Pancreas (tissue), 10 donors: ENCODE measurements at regions of chr5 and their contacts with region 1.

Region 1: GRCh38 chr5:141878711-141879425 is 658 bp upstream of the PCDH1 start:
- DNase-seq: peak; percentile 85 to 92 (median 90)
- ATAC-seq: peak; percentile 73 to 80 (median 76)
- H3K4me3 ChIP-seq: peak overlapping the region; percentile 29 to 82 (median 57)
- H3K27ac ChIP-seq: peak overlapping the region; percentile 39 to 87 (median 76)
- H3K4me1 ChIP-seq: peaks cover 6 to 17% (median 10%) of the 10 kb centered on the region in 3 donors
- H3K27me3 ChIP-seq: peaks cover 0 to 5% (median 0%) of the 10 kb centered on the region in 4 donors
- CTCF ChIP-seq: peak; percentile 93 to 99 (median 96)

Region 2: GRCh38 chr5:141701360-141702119 is 177.3 kb before region 1 on chr5:
- intact Hi-C with region 1: loop called in 2 of 3 experiments (anchors 2 to 5 kb)
- DNase-seq: no peak
- ATAC-seq: peak in 1 of 4 donors; percentile 4
- H3K4me3 ChIP-seq: peak overlapping the region in 2 of 4 donors; percentile 51 to 57
- H3K27ac ChIP-seq: no peak overlapping the region
- H3K4me1 ChIP-seq: peaks cover 0 to 4% (median 0%) of the 10 kb centered on the region in 3 donors
- H3K27me3 ChIP-seq: peaks cover 0 to 7% (median 2%) of the 10 kb centered on the region in 4 donors
- CTCF ChIP-seq: no peak

Region 3: DNA sequence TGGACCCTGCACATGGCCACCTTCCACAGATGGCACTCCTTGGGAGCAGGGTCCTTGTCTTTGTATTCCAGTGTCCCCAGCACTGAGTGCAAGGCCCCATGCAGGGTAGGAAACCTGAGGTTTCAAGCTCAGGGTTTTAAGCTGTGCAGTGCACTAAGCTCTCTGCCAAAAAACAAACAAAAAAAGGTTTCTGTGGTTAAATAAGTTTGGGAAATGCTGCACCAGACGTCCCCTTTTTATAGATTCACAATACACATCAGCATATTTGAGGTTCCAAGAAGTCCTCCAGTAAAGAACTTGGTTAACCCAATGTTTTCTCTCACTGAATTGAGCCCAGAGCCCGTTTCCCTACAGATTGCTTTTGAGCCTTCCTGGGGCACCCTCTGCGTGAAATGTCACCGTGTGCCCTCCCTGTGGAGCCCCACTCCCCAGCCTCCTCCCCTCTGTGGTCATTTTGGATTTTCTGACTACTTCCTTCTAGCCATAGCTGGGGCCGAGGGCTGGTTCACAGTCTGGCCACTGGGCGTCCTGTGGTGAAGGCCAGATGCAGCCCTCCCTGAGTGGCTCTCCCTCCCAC is 61.9 kb after region 1 on chr5:
- intact Hi-C with region 1: loop called in 1 of 3 experiments (anchors 10 kb)
- DNase-seq: no peak
- ATAC-seq: peak in 3 of 4 donors; percentile 46 to 81 (median 64)
- H3K4me3 ChIP-seq: no peak overlapping the region
- H3K27ac ChIP-seq: peak overlapping the region in 1 of 4 donors; percentile 17
- H3K4me1 ChIP-seq: no peaks in the 10 kb centered on the region
- H3K27me3 ChIP-seq: no peaks in the 10 kb centered on the region
- CTCF ChIP-seq: no peak

Region 4: DNA sequence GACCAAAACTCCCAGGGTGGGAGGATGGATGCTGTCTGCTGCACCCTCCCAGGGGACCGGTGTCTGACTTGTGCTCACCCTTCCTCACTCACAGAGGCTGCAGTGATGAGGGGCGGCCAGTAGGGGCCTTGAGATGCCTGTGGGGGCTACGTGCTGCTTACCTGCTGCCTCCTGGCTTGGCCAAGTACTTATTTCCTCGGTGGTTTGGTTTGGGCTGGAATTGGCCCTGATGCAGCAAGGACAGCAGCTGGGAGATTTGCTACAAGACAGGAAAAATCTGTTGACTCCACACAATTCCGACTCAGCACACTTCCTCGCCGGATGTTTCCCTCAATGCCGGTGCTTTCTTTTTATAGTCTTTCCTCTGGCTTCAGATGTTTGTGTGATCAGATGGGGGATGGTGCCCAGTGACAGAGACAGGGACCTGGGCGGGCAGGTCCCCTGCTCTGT is 72.5 kb after region 1 on chr5:
- intact Hi-C with region 1: loop called in 2 of 3 experiments (anchors 10 kb)
- DNase-seq: no peak
- ATAC-seq: peak in 3 of 4 donors; percentile 17 to 41 (median 40)
- H3K4me3 ChIP-seq: no peak overlapping the region
- H3K27ac ChIP-seq: no peak overlapping the region
- H3K4me1 ChIP-seq: no peaks in the 10 kb centered on the region
- H3K27me3 ChIP-seq: no peaks in the 10 kb centered on the region
- CTCF ChIP-seq: no peak

Region 5: GRCh38 chr5:142034994-142035393 is 156.1 kb after region 1 on chr5:
- intact Hi-C with region 1: no loop called
- DNase-seq: no peak
- ATAC-seq: no peak
- H3K4me3 ChIP-seq: no peak overlapping the region
- H3K27ac ChIP-seq: no peak overlapping the region
- H3K4me1 ChIP-seq: no peaks in the 10 kb centered on the region
- H3K27me3 ChIP-seq: no peaks in the 10 kb centered on the region
- CTCF ChIP-seq: no peak